Activated CD4-positive, alpha-beta T cell treated with anti-CD3 and anti-CD28 coated beads for 36 hours (primary cell): ENCODE measurements at regions of chr19 and their contacts with region 1.

Region 1: GRCh38 chr19:48492925-48493717 is 18.5 kb downstream of the LMTK3 start:
- DNase-seq: peak; percentile 98
- ATAC-seq: peak; percentile 81
- H3K4me3 Mint-ChIP-seq: peak overlapping the region; percentile 68
- H3K27ac Mint-ChIP-seq: peak overlapping the region; percentile 42
- H3K4me1 Mint-ChIP-seq: peaks cover 30% of the 10 kb centered on the region
- H3K27me3 Mint-ChIP-seq: peaks cover 39% of the 10 kb centered on the region

Region 2: DNA sequence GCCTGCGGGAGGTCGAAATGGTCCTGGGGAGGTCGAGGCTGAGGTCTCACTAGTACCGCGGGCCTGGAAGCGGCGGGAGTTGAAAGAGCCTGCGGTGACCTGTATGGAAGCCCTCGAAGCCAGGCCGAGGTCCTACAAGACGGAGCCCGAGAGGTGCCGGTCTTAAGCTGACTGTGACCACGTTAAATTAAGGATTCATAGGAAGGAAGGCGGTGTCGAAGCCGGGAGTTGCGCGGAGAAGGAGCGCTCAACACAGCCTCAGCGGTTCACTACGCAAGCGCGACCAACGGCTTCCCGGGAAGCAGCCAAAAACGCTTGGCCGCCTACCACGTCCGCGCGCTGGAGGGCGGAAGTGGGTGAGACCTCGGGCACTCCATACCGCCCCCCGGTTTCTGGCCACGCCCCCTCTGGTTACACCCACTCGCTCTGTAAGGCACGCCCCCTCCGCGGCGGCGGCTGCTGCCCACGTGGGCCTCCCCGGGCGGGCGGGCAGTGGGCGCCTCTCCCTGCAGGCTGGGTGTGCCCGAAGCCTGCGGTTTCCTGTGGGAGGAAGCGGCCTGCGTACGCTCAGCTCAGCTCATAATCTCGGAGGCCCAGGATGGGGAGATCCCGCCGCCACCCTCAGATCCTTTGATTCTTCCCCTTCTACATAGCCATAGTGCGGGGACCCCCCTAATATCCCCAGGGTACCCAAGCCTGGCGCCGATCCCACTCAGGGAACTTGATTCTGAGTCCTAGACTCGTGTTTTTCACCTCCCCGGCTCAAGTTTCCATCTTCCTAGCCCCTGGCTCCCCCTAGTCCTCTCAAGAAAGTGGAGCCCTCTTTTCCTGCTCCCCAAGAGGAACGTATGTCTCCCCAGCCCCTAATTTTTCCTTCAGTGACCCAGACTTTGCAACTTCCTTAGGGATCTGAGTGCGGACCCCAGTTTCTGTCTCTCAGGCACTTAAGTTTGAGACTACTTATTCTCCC is 171.2 kb before region 1 on chr19:
- CTCF ChIA-PET with region 1: no interaction called
- POLR2A ChIA-PET with region 1: no interaction called
- intact Hi-C with region 1: loop called in 1 of 2 experiments (anchors 1 kb)
- DNase-seq: peak; percentile 99
- ATAC-seq: peak; percentile 68
- H3K4me3 Mint-ChIP-seq: peak overlapping the region; percentile 82
- H3K27ac Mint-ChIP-seq: peak overlapping the region; percentile 97
- H3K4me1 Mint-ChIP-seq: peaks cover 56% of the 10 kb centered on the region
- H3K27me3 Mint-ChIP-seq: no peaks in the 10 kb centered on the region

Region 3: DNA sequence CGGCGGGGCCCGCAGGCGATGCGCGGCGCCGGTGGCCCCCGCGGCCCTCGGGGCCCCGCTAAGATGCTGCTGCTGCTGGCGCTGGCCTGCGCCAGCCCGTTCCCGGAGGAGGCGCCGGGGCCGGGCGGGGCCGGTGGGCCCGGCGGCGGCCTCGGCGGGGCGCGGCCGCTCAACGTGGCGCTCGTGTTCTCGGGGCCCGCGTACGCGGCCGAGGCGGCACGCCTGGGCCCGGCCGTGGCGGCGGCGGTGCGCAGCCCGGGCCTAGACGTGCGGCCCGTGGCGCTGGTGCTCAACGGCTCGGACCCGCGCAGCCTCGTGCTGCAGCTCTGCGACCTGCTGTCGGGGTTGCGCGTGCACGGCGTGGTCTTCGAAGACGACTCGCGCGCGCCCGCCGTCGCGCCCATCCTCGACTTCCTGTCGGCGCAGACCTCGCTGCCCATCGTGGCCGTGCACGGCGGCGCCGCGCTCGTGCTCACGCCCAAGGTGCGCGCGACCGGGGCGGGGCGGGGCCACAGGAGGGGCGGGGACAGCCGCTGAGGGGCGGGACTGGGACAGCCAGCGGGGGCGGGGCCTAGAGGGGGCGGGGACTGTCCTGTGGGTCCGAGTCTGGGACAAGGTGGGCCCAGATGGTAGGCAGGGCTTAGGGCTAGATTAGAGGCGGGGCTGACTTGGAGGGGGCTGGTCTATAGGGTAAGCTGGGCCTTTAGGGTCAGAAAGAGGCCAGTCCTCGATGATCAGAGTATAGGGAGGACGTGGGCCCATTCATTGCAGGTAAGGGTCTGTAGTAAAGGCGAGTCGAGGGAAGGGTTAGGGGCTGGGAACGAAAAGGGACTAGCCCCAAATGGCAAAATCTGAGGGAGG is 94.5 kb before region 1 on chr19:
- CTCF ChIA-PET with region 1: interaction called, 4 read pairs
- POLR2A ChIA-PET with region 1: no interaction called
- intact Hi-C with region 1: loop called (anchors 2 to 10 kb)
- DNase-seq: peak; percentile 94
- ATAC-seq: peak; percentile 68
- H3K4me3 Mint-ChIP-seq: peak overlapping the region; percentile 83
- H3K27ac Mint-ChIP-seq: no peak overlapping the region
- H3K4me1 Mint-ChIP-seq: peaks cover 29% of the 10 kb centered on the region
- H3K27me3 Mint-ChIP-seq: peaks cover 31% of the 10 kb centered on the region

Region 4: GRCh38 chr19:48480558-48481500 is 12.3 kb before region 1 on chr19:
- CTCF ChIA-PET with region 1: interaction called, 12 read pairs
- POLR2A ChIA-PET with region 1: interaction called, 4 read pairs
- intact Hi-C with region 1: no loop called
- DNase-seq: peak; percentile 77
- ATAC-seq: peak; percentile 80
- H3K4me3 Mint-ChIP-seq: peak overlapping the region; percentile 76
- H3K27ac Mint-ChIP-seq: peak overlapping the region; percentile 86
- H3K4me1 Mint-ChIP-seq: peaks cover 11% of the 10 kb centered on the region
- H3K27me3 Mint-ChIP-seq: no peaks in the 10 kb centered on the region

Region 5: DNA sequence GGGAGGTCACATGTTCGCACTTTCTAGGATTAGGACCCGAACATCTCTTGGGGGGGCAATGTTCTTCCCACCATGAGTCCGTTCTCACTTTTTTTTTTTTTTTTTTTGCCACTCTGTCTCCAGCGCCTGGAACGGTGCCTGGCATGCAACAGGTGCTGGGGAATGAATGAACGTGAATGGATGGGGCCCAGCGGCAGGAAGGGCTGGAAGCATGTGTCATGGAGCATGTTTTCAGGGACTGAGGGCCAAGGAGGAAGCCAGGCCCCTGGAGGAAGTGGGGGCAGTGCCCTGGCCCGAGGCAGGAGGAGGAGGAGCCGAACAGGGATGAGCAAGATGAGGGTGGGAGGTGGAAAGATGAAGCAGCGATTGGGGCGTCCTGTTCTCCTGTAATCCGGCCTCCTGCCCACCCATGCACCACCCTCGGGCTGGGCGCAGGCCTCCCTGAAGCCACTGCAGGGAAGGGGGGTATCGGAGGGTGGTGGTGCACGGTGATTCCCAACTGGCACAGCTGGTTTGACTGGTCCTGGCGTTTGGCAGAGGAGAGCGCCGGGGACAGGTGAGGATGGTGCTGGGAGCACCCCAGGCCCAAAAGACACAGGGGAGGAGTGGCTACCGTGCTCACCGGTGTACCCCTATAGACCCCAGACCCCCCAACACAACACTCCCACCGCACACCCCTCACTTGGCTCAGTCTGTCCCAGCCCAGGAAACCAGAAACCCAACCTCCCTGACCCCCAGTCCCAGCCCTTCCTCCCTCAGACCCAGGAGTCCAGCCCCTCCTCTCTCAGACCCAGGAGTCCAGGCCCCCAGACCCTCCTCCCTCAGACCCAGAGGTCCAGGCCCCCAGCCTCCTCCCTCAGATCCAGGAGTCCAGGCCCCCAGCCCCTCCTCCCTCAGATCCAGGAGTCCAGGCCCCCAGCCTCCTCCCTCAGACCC is 50.3 kb after region 1 on chr19:
- CTCF ChIA-PET with region 1: no interaction called
- POLR2A ChIA-PET with region 1: no interaction called
- intact Hi-C with region 1: no loop called
- DNase-seq: no peak
- ATAC-seq: no peak
- H3K4me3 Mint-ChIP-seq: no peak overlapping the region
- H3K27ac Mint-ChIP-seq: no peak overlapping the region
- H3K4me1 Mint-ChIP-seq: no peaks in the 10 kb centered on the region
- H3K27me3 Mint-ChIP-seq: peaks cover 2% of the 10 kb centered on the region

Region 6: DNA sequence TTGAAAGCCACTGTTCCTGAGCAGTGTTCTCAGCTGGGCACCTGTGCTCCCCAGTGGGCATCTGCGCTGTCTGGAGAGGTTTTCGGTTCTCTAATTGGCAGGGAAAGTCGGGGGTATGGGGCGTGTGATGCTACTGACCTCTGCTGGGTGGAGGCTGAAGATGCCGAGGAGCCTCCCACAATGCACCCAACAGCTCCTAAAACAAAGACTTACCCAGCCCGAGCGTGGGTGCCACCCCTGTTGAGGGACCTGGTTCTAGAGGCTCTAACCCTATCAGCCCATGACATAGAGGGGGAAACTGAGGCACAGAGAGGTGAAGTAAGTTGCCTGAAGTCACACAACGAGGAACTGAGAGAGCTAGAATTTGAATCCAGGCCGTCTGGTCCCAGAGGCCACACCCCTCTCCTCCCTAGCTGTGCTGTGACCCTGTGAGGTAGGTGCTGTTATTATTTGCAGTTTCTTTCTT is 115.7 kb after region 1 on chr19:
- CTCF ChIA-PET with region 1: interaction called, 8 read pairs
- POLR2A ChIA-PET with region 1: interaction called, 3 read pairs
- intact Hi-C with region 1: loop called in 1 of 2 experiments (anchors 1 kb)
- DNase-seq: peak; percentile 74
- ATAC-seq: peak; percentile 86
- H3K4me3 Mint-ChIP-seq: no peak overlapping the region
- H3K27ac Mint-ChIP-seq: no peak overlapping the region
- H3K4me1 Mint-ChIP-seq: peaks cover 3% of the 10 kb centered on the region
- H3K27me3 Mint-ChIP-seq: no peaks in the 10 kb centered on the region

Region 7: DNA sequence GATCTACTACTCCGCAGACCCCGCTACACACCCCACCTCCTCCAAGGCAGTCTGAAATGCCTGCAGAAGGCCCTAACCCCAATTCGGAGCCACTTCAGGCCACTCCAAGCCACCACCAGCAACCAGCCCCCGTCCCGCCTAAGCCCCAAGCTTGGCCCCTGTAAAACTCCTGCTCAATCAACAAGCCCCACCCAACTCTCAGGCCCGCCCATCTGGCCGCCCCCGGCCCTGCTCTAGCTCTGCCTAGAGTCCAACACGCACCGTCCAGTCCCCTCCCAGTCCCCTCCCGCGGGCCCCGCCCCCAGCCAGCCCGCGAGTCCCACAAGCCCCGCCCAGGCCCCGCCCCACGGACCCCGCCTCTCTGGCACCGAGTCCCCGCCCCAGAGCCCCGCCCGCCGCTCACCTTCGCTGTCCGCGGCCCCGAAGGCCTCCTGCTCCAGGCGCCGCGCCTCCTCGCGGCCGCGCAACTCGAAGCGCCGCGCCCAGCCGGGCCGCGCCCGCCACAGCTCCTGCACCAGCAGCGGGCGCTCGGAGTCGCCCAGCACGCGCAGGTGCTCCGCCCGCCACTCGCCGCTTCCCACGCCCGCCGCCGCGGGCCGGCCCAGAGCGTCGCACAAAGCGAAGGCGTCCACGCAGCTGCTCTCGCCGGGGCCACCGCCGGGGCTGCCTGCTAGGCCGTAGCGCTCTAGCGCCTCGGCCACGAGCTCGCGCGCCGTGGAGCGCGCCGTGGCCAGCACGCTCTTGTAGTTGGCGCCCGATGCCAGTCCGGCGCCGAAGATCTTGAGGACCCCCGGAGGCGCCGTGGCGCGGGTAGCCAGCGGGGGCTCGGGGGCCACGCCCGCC is 245.7 kb after region 1 on chr19:
- CTCF ChIA-PET with region 1: no interaction called
- POLR2A ChIA-PET with region 1: no interaction called
- intact Hi-C with region 1: loop called in 1 of 2 experiments (anchors 2 kb)
- DNase-seq: peak; percentile 99
- ATAC-seq: peak; percentile 96
- H3K4me3 Mint-ChIP-seq: peak overlapping the region; percentile 51
- H3K27ac Mint-ChIP-seq: peak overlapping the region; percentile 51
- H3K4me1 Mint-ChIP-seq: peaks cover 17% of the 10 kb centered on the region
- H3K27me3 Mint-ChIP-seq: peaks cover 3% of the 10 kb centered on the region

Region 8: DNA sequence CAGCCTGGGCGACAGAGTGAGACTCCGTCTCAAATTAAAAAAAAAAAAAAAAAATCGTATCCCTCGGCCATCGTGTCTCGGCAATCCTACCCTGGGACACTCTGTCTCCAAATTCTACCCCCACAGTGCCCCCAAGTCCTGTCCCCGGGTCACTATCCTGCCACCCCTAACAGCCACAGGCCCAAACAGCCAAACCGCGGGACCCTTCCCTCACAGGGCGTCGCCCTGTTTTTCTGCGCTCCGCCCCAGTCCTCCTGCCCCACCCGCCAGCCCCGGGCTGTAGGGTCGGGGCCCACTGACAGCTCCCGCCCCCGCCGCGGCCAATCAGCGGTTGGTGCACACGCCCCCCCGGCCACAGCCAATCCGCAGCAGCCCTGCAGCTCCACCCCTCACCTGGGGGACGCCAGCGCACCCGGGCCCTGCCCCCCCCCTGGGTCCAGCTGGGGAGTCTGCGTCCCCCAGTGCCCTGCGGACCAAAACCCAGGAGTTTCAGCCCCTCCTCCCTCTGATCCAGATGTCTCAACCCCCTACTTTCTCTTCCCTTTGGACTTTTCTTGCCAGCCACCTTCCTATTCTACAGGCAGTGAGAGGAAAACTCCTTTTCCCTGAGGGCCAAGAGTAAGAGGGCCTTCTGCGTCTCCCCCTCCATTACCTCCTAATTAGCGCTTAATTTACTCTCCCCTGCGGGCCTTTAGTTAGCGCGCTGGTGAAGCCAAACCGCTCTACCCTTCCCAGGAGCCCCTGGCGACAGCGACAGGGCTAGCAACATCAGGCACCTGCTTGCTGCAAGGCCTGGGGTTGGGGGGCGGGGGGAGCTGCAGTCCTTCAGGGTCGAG is 319.2 kb after region 1 on chr19:
- CTCF ChIA-PET with region 1: no interaction called
- POLR2A ChIA-PET with region 1: no interaction called
- intact Hi-C with region 1: no loop called
- DNase-seq: peak; percentile 78
- ATAC-seq: peak; percentile 40
- H3K4me3 Mint-ChIP-seq: peak overlapping the region; percentile 85
- H3K27ac Mint-ChIP-seq: peak overlapping the region; percentile 37
- H3K4me1 Mint-ChIP-seq: peaks cover 29% of the 10 kb centered on the region
- H3K27me3 Mint-ChIP-seq: no peaks in the 10 kb centered on the region

Region 9: DNA sequence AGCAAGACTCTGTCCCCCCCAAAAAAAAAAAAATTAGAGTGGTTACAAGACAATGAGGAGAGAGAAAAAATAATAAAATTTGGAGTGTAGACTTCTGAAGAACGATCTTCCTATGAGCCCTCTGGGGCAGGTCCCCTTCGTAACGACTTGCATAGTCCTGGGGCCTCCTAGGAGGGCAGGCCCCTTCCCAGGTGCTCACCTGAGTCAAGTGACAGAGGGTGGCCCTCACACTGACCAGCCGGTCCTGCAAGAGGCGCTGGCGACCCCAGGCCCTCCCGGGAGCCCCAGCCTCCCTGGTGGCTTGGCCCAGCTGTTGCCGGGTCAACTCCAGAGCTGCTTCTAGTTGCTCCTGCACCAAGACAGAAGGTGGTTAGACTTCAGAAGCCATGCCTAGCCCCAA is 360.4 kb after region 1 on chr19:
- CTCF ChIA-PET with region 1: no interaction called
- POLR2A ChIA-PET with region 1: no interaction called
- intact Hi-C with region 1: no loop called
- DNase-seq: no peak
- ATAC-seq: no peak
- H3K4me3 Mint-ChIP-seq: no peak overlapping the region
- H3K27ac Mint-ChIP-seq: no peak overlapping the region
- H3K4me1 Mint-ChIP-seq: no peaks in the 10 kb centered on the region
- H3K27me3 Mint-ChIP-seq: no peaks in the 10 kb centered on the region

Region 10: GRCh38 chr19:49272184-49272583 is 779.1 kb after region 1 on chr19:
- CTCF ChIA-PET with region 1: no interaction called
- POLR2A ChIA-PET with region 1: interaction called, 10 read pairs
- intact Hi-C with region 1: no loop called
- DNase-seq: no peak
- ATAC-seq: peak; percentile 75
- H3K4me3 Mint-ChIP-seq: no peak overlapping the region
- H3K27ac Mint-ChIP-seq: no peak overlapping the region
- H3K4me1 Mint-ChIP-seq: peaks cover 3% of the 10 kb centered on the region
- H3K27me3 Mint-ChIP-seq: peaks cover 10% of the 10 kb centered on the region